WTC11 (cell line): ENCODE measurements at regions of chr19 and their contacts with region 1.

Region 1: DNA sequence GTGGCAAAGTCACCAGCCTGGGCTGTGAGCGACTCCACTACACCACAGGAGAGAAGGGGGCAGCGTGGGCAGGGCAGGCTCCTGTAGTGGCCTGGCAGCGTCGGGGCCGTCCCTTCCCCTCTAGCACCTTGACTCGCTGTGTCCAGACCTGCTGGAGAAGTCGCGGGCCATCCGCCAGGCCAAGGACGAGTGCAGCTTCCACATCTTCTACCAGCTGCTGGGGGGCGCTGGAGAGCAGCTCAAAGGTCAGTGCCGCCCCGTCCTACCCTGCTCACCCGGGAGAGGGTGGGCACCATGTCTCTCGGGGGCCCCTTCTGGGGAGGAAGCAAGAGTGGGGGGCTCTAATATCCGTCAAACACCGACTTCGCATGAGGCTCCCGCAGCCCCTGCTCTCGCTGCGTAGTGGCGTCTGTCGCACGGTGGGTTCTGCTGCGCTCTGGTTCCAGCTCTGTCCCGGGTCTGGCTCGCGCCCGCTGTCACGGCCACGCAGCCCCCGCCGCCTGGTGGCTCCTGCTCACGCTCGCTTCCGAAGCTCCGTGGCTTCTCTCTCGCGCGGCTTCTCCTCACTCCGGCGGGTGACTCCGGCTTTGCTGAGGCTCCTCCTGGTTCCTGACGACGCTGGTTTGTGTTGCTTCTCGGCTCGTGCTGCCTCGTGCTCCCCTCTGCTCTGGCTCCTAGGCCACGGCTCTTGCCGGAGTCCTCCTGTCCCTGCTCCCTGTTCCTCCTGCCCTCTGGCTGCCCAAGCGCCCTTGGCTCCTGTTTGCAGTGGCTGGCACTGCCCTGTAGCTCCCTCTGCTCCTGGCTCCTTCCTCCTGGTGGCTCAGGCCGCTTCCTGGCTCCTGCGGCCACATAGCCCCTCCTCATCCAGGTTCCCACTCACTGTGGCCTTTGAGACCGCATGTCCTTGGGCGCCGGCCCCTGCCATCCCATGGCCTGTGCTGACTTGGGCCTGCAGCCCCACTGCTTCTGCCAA is 27.2 kb downstream of the MYH14 start:
- DNase-seq: peak; percentile 76
- ATAC-seq: peak; percentile 89
- H3K4me3 Mint-ChIP-seq: peak overlapping the region; percentile 41
- H3K27ac Mint-ChIP-seq: no peak overlapping the region
- H3K4me1 Mint-ChIP-seq: peaks cover 10% of the 10 kb centered on the region
- H3K27me3 Mint-ChIP-seq: no peaks in the 10 kb centered on the region
- CTCF ChIP-seq: peak; percentile 61

Region 2: DNA sequence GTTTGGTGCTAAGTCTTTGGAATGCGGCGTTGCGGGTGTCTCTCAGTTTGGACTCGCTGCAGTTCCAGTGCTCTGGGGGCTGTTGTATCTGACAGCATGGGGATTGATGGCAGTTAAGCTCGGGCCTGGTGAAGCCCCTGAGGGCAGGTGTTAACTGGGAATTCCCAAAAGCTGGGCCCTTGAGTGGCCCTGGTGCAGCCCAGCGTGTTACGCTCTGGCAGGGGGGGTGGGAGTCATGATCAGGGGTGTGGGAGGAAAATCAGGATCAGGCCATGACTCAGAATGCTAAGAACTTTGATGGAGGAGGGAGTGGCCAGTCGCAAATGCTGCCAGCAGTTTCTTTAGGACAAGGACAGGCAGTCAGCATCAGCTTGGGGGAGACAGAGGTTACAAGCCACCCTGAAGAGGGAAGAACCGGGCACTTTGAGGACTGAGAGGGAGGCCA is 444.3 kb before region 1 on chr19:
- CTCF ChIA-PET with region 1: no interaction called
- POLR2A ChIA-PET with region 1: no interaction called
- DNase-seq: no peak
- ATAC-seq: no peak
- H3K4me3 Mint-ChIP-seq: no peak overlapping the region
- H3K27ac Mint-ChIP-seq: peak overlapping the region; percentile 41; the same call in 1 of the 2 replicates
- H3K4me1 Mint-ChIP-seq: no peaks in the 10 kb centered on the region
- H3K27me3 Mint-ChIP-seq: no peaks in the 10 kb centered on the region
- CTCF ChIP-seq: no peak

Region 3: DNA sequence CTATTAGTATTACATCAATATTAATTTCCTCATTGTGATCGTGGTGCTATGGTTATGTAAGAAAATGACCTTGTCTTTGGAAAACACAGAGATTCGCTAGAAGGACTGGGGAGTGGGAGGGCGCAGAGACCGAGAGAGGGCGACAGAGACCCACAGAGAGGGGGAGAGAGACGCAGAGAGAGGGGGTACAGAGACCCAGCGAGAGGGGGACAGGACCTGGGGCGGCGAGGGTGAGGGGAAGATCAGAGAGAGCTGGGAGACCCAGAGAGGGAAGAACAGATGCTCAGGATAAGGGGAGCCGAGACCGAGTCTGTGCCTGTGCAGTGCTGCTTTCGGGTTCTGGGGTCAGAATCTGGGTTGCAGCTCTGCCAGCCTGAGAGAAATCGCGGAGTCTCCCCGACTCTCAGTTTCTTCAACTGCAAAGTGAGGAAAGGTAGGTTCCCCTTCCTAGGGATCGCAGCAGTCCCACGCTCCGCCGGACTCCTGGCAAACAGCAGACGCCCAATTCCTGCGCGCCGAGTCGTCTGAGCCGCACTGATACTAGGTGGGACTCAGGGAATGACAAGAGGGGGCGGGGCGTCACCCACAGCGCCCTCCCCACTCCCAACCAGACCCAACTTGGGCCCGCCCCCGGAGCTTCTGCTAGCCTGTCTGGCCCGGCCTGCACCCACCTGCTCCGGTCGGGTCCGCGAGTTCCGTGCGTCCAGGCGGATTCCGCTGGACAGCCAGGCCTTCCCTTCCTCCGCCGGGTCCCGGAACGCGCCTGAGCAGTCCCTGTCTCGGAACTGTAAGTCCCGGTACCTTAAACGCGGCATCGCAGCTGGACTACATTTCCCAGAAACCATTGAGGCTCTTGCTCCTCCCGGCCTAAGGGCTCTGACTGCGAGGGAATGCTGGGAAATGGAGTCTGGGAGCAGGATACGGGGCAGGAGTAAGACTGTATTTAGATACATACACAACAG is 82.9 kb before region 1 on chr19:
- CTCF ChIA-PET with region 1: interaction called, 19 read pairs
- POLR2A ChIA-PET with region 1: interaction called, 3 read pairs
- DNase-seq: peak; percentile 86
- ATAC-seq: peak; percentile 95
- H3K4me3 Mint-ChIP-seq: peak overlapping the region; percentile 72
- H3K27ac Mint-ChIP-seq: no peak overlapping the region
- H3K4me1 Mint-ChIP-seq: no peaks in the 10 kb centered on the region
- H3K27me3 Mint-ChIP-seq: peaks cover 28% of the 10 kb centered on the region
- CTCF ChIP-seq: no peak

Region 4: GRCh38 chr19:50214761-50215575 is 15.7 kb before region 1 on chr19:
- CTCF ChIA-PET with region 1: interaction called, 12 read pairs
- POLR2A ChIA-PET with region 1: interaction called, 3 read pairs
- DNase-seq: peak; percentile 55
- ATAC-seq: peak; percentile 61; the same call in 1 of the 2 replicates
- H3K4me3 Mint-ChIP-seq: no peak overlapping the region
- H3K27ac Mint-ChIP-seq: no peak overlapping the region
- H3K4me1 Mint-ChIP-seq: peaks cover 11% of the 10 kb centered on the region
- H3K27me3 Mint-ChIP-seq: no peaks in the 10 kb centered on the region
- CTCF ChIP-seq: no peak

Region 5: GRCh38 chr19:50258918-50259372 is 28.3 kb after region 1 on chr19:
- CTCF ChIA-PET with region 1: interaction called, 53 read pairs
- POLR2A ChIA-PET with region 1: no interaction called
- DNase-seq: peak; percentile 84
- ATAC-seq: peak; percentile 89
- H3K4me3 Mint-ChIP-seq: no peak overlapping the region
- H3K27ac Mint-ChIP-seq: no peak overlapping the region
- H3K4me1 Mint-ChIP-seq: no peaks in the 10 kb centered on the region
- H3K27me3 Mint-ChIP-seq: peaks cover 4% of the 10 kb centered on the region; the same call in 1 of the 2 replicates
- CTCF ChIP-seq: peak; percentile 89

Region 6: GRCh38 chr19:50315773-50316448 is 85.2 kb after region 1 on chr19:
- CTCF ChIA-PET with region 1: interaction called, 22 read pairs
- POLR2A ChIA-PET with region 1: no interaction called
- DNase-seq: peak; percentile 75
- ATAC-seq: peak; percentile 24
- H3K4me3 Mint-ChIP-seq: peak overlapping the region; percentile 82
- H3K27ac Mint-ChIP-seq: peak overlapping the region; percentile 98
- H3K4me1 Mint-ChIP-seq: peaks cover 30% of the 10 kb centered on the region
- H3K27me3 Mint-ChIP-seq: peaks cover 6% of the 10 kb centered on the region
- CTCF ChIP-seq: no peak

Region 7: DNA sequence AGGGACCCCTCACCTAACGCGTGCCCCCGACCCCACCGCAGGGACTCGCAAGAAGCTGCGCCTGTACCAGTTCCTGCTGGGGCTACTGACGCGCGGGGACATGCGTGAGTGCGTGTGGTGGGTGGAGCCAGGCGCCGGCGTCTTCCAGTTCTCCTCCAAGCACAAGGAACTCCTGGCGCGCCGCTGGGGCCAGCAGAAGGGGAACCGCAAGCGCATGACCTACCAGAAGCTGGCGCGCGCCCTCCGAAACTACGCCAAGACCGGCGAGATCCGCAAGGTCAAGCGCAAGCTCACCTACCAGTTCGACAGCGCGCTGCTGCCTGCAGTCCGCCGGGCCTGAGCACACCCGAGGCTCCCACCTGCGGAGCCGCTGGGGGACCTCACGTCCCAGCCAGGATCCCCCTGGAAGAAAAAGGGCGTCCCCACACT is 197.3 kb after region 1 on chr19:
- CTCF ChIA-PET with region 1: no interaction called
- POLR2A ChIA-PET with region 1: no interaction called
- DNase-seq: peak; percentile 81
- ATAC-seq: peak; percentile 31
- H3K4me3 Mint-ChIP-seq: peak overlapping the region; percentile 47
- H3K27ac Mint-ChIP-seq: no peak overlapping the region
- H3K4me1 Mint-ChIP-seq: peaks cover 21% of the 10 kb centered on the region
- H3K27me3 Mint-ChIP-seq: peaks cover 35% of the 10 kb centered on the region
- CTCF ChIP-seq: no peak